ENCODE measurements at regions of chr16 and their contacts with region 1.

Region 1: GRCh38 chr16:46929378-46930332 is 43.8 kb downstream of the DNAJA2 start:
- DNase-seq: peak; percentile 46
- H3K4me3 ChIP-seq: no peak overlapping the region
- H3K27ac ChIP-seq: no peak overlapping the region
- H3K4me1 ChIP-seq: no peaks in the 10 kb centered on the region
- H3K27me3 ChIP-seq: no peaks in the 10 kb centered on the region
- CTCF ChIP-seq: peak; percentile 84 to 90
- POLR2A ChIP-seq: no peak

Region 2: GRCh38 chr16:46789499-46790414 is 139.9 kb before region 1 on chr16:
- CTCF ChIA-PET with region 1: no interaction called
- POLR2A ChIA-PET with region 1: no interaction called
- dilution Hi-C with region 1: no loop called
- intact Hi-C with region 1: no loop called
- DNase-seq: peak; percentile 80
- H3K4me3 ChIP-seq: peak overlapping the region; percentile 17 to 58 (median 51)
- H3K27ac ChIP-seq: peak overlapping the region; percentile 0
- H3K4me1 ChIP-seq: peaks cover 2% of the 10 kb centered on the region
- H3K27me3 ChIP-seq: peaks cover 7 to 10% of the 10 kb centered on the region in 2 experiments
- CTCF ChIP-seq: no peak
- POLR2A ChIP-seq: peak; percentile 68

Region 3: GRCh38 chr16:46918861-46919792 is 10.5 kb before region 1 on chr16:
- CTCF ChIA-PET with region 1: interaction called, 10 read pairs
- POLR2A ChIA-PET with region 1: no interaction called
- dilution Hi-C with region 1: no loop called
- intact Hi-C with region 1: no loop called
- DNase-seq: no peak
- H3K4me3 ChIP-seq: no peak overlapping the region
- H3K27ac ChIP-seq: no peak overlapping the region
- H3K4me1 ChIP-seq: no peaks in the 10 kb centered on the region
- H3K27me3 ChIP-seq: no peaks in the 10 kb centered on the region
- CTCF ChIP-seq: no peak
- POLR2A ChIP-seq: no peak